Activated B cell treated with CpG ODN at 0.5 μM for 24 hours (primary cell): ENCODE measurements at regions of chr6 and their contacts with region 1.

Region 1: DNA sequence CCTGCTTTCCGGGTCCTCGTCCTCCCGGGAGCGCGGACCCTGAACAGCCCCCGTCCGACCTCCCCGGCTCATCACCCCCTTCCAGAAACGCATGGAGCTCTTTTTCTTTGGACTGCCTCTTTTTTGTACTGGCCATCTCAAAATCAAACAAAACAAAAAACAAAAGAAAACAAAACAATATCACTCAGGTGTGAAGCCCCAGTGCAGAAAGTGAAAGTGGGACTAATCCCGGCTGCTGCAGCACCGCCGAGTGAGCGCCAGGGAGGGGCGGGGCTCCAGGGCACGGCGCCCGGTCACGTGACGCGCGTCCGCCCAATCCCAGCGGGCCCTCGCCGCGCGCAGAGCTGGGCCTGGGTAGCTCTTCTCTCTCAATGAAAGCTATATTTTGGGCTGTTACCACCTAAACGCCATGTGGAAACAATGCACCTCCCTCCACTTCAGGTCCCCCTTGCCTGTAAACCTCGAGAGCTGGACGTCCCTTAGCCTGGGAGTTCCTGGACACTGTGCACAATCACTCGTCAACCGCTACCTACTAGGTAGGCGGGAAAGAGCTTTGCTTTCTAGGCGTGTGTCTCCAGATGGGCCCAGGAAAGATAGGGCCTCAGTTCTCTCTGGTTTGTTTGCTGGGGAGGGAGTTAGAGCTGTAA is 93.7 kb upstream of the PRDM1 start:
- DNase-seq: peak; percentile 88
- ATAC-seq: peak; percentile 92
- H3K4me3 Mint-ChIP-seq: peak overlapping the region; percentile 96
- H3K27ac Mint-ChIP-seq: peak overlapping the region; percentile 97
- H3K4me1 Mint-ChIP-seq: peaks cover 24% of the 10 kb centered on the region
- H3K27me3 Mint-ChIP-seq: peaks cover 21% of the 10 kb centered on the region
- CTCF ChIP-seq: no peak

Region 2: GRCh38 chr6:105651969-105652368 is 340.5 kb before region 1 on chr6:
- CTCF ChIA-PET with region 1: no interaction called
- POLR2A ChIA-PET with region 1: no interaction called
- intact Hi-C with region 1: no loop called
- DNase-seq: no peak
- ATAC-seq: no peak
- H3K4me3 Mint-ChIP-seq: no peak overlapping the region
- H3K27ac Mint-ChIP-seq: no peak overlapping the region
- H3K4me1 Mint-ChIP-seq: no peaks in the 10 kb centered on the region
- H3K27me3 Mint-ChIP-seq: peaks cover 8% of the 10 kb centered on the region
- CTCF ChIP-seq: no peak

Region 3: DNA sequence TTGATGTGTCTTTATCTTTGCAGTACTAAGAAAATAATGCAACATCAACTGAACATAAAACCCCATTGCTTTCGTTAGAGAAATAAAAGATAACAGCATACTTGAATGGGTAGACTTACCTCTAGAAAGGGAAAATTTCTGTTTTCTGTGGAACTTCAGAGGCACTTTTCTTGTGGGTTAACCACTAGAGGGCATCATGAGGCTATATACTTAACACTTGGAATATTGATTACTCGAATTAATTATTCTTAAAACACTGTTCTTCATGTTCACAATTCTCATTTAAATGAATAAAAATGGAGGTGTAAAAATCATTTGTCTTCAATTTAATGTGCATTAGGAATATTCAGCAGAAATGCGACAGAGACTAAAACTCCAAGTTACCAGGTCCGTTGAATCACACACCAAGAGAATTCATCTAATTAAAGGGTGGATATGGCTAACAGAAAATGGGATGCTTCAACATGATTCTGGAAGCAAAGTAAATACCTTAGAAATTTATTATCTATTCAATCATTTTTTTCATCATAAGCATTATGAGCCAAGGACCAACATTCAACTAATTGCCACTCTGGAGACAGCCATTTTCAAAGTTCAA is 258.8 kb before region 1 on chr6:
- CTCF ChIA-PET with region 1: no interaction called
- POLR2A ChIA-PET with region 1: interaction called, 4 read pairs
- intact Hi-C with region 1: loop called (anchors 2 kb)
- DNase-seq: no peak
- ATAC-seq: no peak
- H3K4me3 Mint-ChIP-seq: no peak overlapping the region
- H3K27ac Mint-ChIP-seq: no peak overlapping the region
- H3K4me1 Mint-ChIP-seq: no peaks in the 10 kb centered on the region
- H3K27me3 Mint-ChIP-seq: no peaks in the 10 kb centered on the region
- CTCF ChIP-seq: peak; percentile 39

Region 4: DNA sequence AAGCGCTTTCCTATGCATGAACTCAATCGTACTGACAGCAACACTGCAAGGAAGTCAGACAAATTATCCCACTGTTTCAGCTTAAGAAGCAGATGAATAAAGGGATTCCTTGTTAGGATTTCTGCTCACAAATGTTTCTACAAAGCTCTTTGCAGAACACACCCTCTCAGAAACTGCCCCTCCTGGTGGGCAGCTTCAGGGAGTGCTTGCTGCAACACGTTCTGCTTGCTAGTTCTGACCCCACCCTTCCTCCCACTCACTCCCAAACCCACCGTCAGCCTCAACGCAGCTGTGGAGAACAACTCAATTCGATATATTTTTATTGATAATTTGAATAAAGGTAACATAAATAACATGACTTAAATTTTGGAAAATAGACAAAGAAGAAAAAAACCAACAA is 157.1 kb before region 1 on chr6:
- CTCF ChIA-PET with region 1: no interaction called
- POLR2A ChIA-PET with region 1: no interaction called
- intact Hi-C with region 1: loop called (anchors 5 kb)
- DNase-seq: no peak
- ATAC-seq: peak; percentile 52
- H3K4me3 Mint-ChIP-seq: no peak overlapping the region
- H3K27ac Mint-ChIP-seq: no peak overlapping the region
- H3K4me1 Mint-ChIP-seq: peaks cover 20% of the 10 kb centered on the region
- H3K27me3 Mint-ChIP-seq: no peaks in the 10 kb centered on the region
- CTCF ChIP-seq: no peak

Region 5: DNA sequence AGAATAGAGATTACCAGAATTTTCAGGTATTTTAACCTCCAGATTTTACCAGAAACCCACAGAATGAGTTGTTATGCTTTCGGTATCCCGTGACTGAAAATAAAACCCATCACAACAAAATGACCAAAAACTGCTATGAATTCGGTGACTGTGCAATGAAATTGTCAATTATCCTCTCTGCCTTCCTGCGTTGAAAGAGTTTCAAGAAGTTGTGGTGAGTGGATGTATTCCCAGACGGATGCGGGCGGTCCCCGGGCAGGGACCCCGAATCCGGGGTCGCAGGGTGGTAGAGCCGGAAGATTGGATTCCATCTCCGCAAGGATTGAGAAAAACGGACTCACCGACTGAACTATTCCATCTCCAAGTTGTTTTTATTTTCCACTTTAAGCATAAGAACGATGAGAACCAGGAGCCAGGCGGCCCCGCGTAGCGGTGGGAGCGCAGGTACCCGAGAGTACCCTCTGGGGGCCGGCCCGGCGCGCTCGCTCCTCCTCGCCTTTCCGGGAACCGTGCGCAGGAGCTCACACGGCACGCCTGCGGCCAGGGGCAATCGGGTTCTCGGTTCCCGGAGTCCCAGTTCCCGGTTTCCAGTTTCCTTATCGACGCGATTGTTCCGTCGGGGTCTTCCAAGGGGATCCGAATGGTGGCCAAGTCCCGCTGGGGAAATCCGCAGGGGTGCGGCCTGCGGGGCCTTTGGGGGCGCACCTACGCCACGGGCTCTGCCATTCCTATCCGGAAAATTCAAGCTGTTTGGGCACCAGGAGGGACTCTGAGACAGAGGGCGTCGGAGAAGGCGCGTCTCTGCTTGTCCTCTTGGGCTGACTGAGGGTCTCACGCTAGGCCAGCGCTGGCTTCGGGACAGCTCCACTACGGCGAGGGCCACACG is 11.2 kb before region 1 on chr6:
- CTCF ChIA-PET with region 1: no interaction called
- POLR2A ChIA-PET with region 1: interaction called, 33 read pairs
- intact Hi-C with region 1: loop called (anchors 1 kb)
- DNase-seq: no peak
- ATAC-seq: peak; percentile 62
- H3K4me3 Mint-ChIP-seq: peak overlapping the region; percentile 83
- H3K27ac Mint-ChIP-seq: no peak overlapping the region
- H3K4me1 Mint-ChIP-seq: peaks cover 16% of the 10 kb centered on the region
- H3K27me3 Mint-ChIP-seq: peaks cover 41% of the 10 kb centered on the region
- CTCF ChIP-seq: no peak

Region 6: DNA sequence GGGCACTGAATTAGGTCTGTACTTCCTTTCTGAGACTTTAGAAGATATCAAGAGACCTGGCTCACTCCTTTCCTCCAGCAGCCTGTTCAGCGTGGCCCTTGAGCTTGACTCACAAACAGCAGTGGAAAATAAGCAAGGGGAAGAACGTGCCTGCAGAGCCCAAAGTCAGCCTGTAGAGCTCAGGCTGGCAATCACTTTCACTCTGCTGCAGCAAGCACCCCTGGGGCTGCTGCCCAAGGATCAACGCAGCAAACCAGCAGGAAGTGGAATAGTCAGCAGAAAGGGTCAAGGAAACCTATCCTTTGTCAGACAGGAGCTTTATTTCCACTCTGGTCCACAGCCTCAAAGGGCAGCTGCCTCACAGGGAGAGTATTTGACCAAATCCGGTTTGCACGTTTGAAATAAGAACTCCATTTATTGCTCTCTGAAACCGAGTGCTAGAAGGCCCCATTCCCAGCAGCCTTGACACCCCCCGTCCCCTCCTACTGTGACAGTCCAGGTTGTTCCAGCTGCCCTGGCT is 171.1 kb after region 1 on chr6:
- CTCF ChIA-PET with region 1: no interaction called
- POLR2A ChIA-PET with region 1: interaction called, 24 read pairs
- intact Hi-C with region 1: loop called (anchors 1 kb)
- DNase-seq: peak; percentile 37
- ATAC-seq: peak; percentile 57
- H3K4me3 Mint-ChIP-seq: peak overlapping the region; percentile 36
- H3K27ac Mint-ChIP-seq: peak overlapping the region; percentile 92
- H3K4me1 Mint-ChIP-seq: peaks cover 35% of the 10 kb centered on the region
- H3K27me3 Mint-ChIP-seq: no peaks in the 10 kb centered on the region
- CTCF ChIP-seq: no peak

Region 7: GRCh38 chr6:106223300-106223930 is 231.0 kb after region 1 on chr6:
- CTCF ChIA-PET with region 1: interaction called, 42 read pairs
- POLR2A ChIA-PET with region 1: interaction called, 4 read pairs
- intact Hi-C with region 1: loop called (anchors 1 kb)
- DNase-seq: no peak
- ATAC-seq: peak; percentile 72
- H3K4me3 Mint-ChIP-seq: no peak overlapping the region
- H3K27ac Mint-ChIP-seq: no peak overlapping the region
- H3K4me1 Mint-ChIP-seq: peaks cover 8% of the 10 kb centered on the region
- H3K27me3 Mint-ChIP-seq: no peaks in the 10 kb centered on the region
- CTCF ChIP-seq: peak; percentile 17

Region 8: DNA sequence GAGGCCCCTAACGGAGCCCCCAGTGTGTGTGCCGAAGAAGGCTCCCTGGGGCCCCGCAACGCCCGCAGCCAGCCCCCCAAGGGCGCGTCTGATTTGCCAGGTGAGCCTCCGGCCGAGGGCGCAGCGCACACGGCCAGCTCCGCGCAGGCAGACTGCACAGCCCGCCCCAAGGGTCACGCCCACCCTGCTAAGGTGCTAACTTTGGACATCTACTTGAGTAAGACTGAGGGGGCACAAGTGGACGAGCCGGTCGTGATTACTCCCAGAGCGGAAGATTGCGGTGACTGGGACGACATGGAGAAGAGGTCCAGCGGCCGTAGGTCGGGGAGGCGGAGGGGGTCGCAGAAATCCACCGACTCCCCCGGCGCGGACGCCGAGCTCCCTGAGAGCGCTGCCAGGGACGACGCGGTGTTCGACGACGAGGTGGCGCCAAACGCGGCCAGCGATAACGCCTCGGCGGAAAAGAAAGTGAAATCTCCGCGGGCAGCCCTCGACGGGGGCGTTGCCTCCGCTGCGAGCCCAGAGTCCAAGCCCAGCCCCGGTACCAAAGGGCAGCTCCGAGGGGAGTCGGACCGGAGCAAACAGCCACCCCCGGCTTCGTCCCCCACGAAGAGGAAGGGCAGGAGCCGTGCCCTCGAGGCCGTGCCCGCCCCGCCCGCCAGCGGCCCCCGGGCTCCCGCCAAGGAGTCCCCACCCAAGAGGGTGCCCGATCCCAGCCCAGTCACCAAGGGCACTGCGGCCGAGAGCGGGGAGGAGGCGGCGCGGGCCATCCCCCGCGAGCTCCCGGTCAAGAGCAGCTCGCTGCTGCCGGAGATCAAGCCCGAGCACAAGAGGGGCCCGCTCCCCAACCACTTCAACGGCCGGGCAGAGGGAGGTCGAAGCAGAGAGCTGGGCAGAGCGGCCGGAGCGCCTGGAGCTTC is 519.9 kb after region 1 on chr6:
- CTCF ChIA-PET with region 1: no interaction called
- POLR2A ChIA-PET with region 1: no interaction called
- intact Hi-C with region 1: loop called (anchors 10 kb)
- DNase-seq: peak; percentile 79
- ATAC-seq: peak; percentile 68
- H3K4me3 Mint-ChIP-seq: peak overlapping the region; percentile 97
- H3K27ac Mint-ChIP-seq: peak overlapping the region; percentile 94
- H3K4me1 Mint-ChIP-seq: peaks cover 62% of the 10 kb centered on the region
- H3K27me3 Mint-ChIP-seq: no peaks in the 10 kb centered on the region
- CTCF ChIP-seq: no peak